Endothelial cell of umbilical vein (primary cell): ENCODE measurements at regions of chr2 and their contacts with region 1.

Region 1: DNA sequence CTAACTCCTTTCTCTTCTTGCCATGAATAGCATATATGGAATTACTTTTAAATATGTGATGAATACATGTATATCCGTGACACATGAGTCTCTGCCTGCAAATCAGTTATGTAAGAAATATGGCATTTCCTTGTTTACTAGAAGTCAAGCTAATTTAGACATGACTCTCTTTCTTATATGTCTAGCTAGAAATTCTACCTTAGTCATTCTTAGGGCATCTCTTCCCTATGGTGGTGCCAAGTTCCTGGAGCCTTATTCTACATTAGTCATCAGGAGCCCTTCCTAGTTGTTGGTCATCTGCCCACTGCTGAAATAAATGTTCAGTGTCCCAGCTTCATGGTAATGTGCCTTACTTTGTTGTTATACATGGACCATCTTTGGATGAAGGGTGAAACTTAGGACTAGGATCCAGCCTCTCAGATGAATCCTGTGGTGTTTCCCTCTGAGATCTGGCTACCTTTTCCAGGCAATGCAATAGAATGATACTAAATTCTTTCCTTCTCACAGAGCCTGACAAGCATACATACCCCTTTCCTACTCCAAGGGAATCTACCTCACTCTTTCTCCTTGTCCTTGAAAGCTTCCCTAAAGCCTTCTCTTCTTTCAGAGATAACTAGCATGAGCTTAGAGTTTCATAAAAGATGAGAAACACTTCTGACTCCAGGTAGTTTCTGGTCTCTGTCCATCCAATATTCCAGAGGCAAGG is 415.3 kb upstream of the VWC2L start:
- DNase-seq: peak; percentile 82
- H3K4me3 ChIP-seq: no peak overlapping the region
- H3K27ac ChIP-seq: peak overlapping the region; percentile 72
- H3K4me1 ChIP-seq: peaks cover 12% of the 10 kb centered on the region
- H3K27me3 ChIP-seq: no peaks in the 10 kb centered on the region
- CTCF ChIP-seq: no peak
- POLR2A ChIP-seq: no peak

Region 2: DNA sequence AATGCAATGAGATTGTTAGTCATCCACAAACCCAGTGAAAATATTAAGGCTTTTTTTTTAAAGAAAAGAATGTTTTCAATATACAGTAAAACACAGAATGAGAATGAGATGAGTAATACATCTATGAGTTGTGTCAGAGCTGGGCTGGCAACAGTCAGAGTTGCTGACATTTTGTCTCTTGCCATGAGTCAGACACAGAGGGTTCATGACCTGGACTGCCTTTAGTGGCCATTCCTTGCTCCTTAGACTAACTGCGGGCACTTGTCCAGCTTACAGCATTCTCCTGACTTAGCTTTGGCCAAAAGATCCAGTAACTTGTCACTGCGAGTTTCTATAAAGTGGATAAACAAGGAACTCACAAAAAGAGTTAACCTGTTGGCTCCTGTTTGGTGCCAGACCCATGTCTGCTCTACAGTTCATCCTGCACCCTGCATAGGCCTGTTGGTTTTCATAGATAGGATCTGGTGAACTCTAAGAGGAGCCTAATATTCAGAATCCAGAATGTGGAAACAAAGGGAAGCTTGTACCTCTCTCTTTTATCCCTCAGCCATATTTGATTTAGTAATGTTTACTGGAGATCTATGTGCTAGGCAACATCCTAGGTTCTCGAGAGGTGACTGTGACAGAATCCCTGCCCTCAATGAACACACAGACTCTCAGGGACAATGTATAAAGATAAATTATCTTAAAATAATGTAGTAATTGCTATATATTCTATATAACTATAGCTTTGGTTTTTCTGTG is 23.8 kb after region 1 on chr2:
- CTCF ChIA-PET with region 1: interaction called, 10 read pairs
- POLR2A ChIA-PET with region 1: no interaction called
- dilution Hi-C with region 1: no loop called
- intact Hi-C with region 1: loop called (anchors 2 kb)
- DNase-seq: peak; percentile 94
- H3K4me3 ChIP-seq: no peak overlapping the region
- H3K27ac ChIP-seq: peak overlapping the region; percentile 55
- H3K4me1 ChIP-seq: peaks cover 9% of the 10 kb centered on the region
- H3K27me3 ChIP-seq: no peaks in the 10 kb centered on the region
- CTCF ChIP-seq: no peak
- POLR2A ChIP-seq: no peak